ENCODE measurements at regions of chr21 and their contacts with region 1.

Region 1: GRCh38 chr21:42117229-42117966 is 46.3 kb downstream of the UMODL1 start:
- DNase-seq: peak; percentile 83
- ATAC-seq: peak; percentile 85
- H3K4me3 Mint-ChIP-seq: peak overlapping the region; percentile 41; the same call in 1 of the 2 replicates
- H3K27ac Mint-ChIP-seq: no peak overlapping the region
- H3K4me1 Mint-ChIP-seq: peaks cover 25% of the 10 kb centered on the region
- H3K27me3 Mint-ChIP-seq: no peaks in the 10 kb centered on the region
- CTCF ChIP-seq: peak; percentile 94

Region 2: DNA sequence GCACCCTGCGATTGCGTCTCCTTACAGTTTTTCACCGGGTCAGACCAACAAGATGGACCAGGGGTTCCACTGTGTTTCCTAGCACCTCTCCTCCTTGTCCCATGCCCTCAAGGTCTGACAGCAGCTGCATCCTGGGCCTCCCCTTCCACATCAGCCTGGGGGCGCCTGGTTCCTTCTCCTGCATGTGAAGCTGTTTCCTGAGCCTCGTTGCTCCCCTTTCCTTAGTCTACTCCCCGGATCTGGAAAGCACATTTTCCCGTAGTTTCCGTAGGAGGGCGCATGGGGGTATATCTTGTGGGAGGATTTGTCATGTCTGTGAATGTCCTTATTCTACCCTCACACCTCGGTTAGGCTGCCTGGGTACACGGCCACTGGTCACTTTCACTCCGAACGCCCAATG is 244.4 kb before region 1 on chr21:
- CTCF ChIA-PET with region 1: interaction called, 10 read pairs
- POLR2A ChIA-PET with region 1: no interaction called
- DNase-seq: peak; percentile 46
- ATAC-seq: peak; percentile 70
- H3K4me3 Mint-ChIP-seq: no peak overlapping the region
- H3K27ac Mint-ChIP-seq: no peak overlapping the region
- H3K4me1 Mint-ChIP-seq: peaks cover 14% of the 10 kb centered on the region
- H3K27me3 Mint-ChIP-seq: no peaks in the 10 kb centered on the region
- CTCF ChIP-seq: 0 out of 2 replicates have a peak, but pooled peaks have one; percentile 15

Region 3: GRCh38 chr21:41973861-41974751 is 143.3 kb before region 1 on chr21:
- CTCF ChIA-PET with region 1: interaction called, 33 read pairs
- POLR2A ChIA-PET with region 1: no interaction called
- DNase-seq: no peak
- ATAC-seq: peak; percentile 83
- H3K4me3 Mint-ChIP-seq: no peak overlapping the region
- H3K27ac Mint-ChIP-seq: no peak overlapping the region; the same call in 1 of the 2 replicates
- H3K4me1 Mint-ChIP-seq: peaks cover 22% of the 10 kb centered on the region
- H3K27me3 Mint-ChIP-seq: no peaks in the 10 kb centered on the region; the same call in 1 of the 2 replicates
- CTCF ChIP-seq: no peak

Region 4: DNA sequence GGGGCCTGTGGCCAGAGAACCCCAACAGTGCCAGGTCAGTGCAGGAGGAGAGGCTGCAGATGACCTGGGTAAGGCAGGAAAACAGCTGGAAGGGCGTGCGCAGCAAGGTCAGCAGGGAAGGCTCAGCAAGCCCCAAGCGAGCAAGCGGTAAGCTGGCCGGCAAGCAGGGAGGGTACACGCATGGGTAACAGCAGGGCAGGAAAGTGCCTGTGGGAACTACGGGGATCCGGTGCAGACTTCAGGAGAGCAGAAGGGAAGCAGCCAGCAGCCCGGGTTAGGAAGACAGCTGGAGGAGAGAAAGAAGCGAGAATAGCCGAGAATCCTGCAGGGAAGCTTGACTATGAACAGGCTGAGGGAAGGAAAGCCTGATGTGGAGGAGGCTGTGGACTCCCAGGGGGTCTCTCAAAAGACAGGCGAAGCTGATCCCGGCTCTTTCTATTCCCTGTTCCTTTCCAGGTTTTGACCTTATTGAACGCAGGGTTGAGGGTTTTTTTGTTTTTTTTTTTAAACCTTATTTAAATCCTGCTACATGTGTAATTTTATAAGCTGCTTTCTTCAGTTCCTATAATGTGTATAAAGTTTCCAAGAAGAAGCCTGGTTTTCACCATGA is 25.4 kb before region 1 on chr21:
- CTCF ChIA-PET with region 1: interaction called, 11 read pairs
- POLR2A ChIA-PET with region 1: no interaction called
- DNase-seq: peak; percentile 39
- ATAC-seq: peak; percentile 81
- H3K4me3 Mint-ChIP-seq: peak overlapping the region; percentile 24
- H3K27ac Mint-ChIP-seq: no peak overlapping the region
- H3K4me1 Mint-ChIP-seq: peaks cover 12% of the 10 kb centered on the region
- H3K27me3 Mint-ChIP-seq: peaks cover 8% of the 10 kb centered on the region
- CTCF ChIP-seq: no peak

Region 5: DNA sequence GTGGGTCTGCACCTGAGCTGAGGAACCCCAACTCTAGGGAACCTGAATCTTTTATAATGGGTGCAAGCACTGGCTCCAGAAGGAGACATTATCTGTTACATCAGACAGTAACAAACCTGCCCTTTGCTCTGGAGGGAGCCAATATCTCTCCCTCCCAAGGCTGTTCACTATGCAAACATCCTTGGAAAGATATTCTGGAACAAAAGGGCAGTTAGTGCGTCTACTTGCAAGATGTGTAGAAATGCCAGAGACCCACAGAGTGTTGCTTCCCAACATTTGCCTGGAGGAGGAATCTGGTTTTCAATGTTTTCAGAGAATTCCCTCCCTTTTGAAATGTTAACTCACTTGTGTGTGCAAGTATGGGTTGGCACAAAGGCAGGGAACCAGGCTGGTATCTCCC is 14.4 kb before region 1 on chr21:
- CTCF ChIA-PET with region 1: interaction called, 40 read pairs
- POLR2A ChIA-PET with region 1: no interaction called
- DNase-seq: no peak
- ATAC-seq: no peak
- H3K4me3 Mint-ChIP-seq: no peak overlapping the region
- H3K27ac Mint-ChIP-seq: no peak overlapping the region
- H3K4me1 Mint-ChIP-seq: peaks cover 10% of the 10 kb centered on the region
- H3K27me3 Mint-ChIP-seq: no peaks in the 10 kb centered on the region
- CTCF ChIP-seq: no peak